ENCODE measurements at regions of chr1 and their contacts with region 1.

Region 1: GRCh38 chr1:161994175-161994668 is 29.4 kb downstream of the OLFML2B start:
- DNase-seq: no peak
- ATAC-seq: no peak
- H3K4me3 ChIP-seq: no peak overlapping the region
- H3K27ac ChIP-seq: no peak overlapping the region
- H3K4me1 ChIP-seq: no peaks in the 10 kb centered on the region
- CTCF ChIP-seq: no peak
- EP300 ChIP-seq: no peak
- POLR2A ChIP-seq: no peak
- RAD21 ChIP-seq: no peak

Region 2: GRCh38 chr1:161816201-161816600 is 178.0 kb before region 1 on chr1:
- CTCF ChIA-PET with region 1: no interaction called
- POLR2A ChIA-PET with region 1: interaction called, 10 read pairs
- DNase-seq: no peak
- ATAC-seq: no peak
- H3K4me3 ChIP-seq: no peak overlapping the region
- H3K27ac ChIP-seq: no peak overlapping the region
- H3K4me1 ChIP-seq: no peaks in the 10 kb centered on the region
- CTCF ChIP-seq: no peak
- EP300 ChIP-seq: no peak
- POLR2A ChIP-seq: no peak
- RAD21 ChIP-seq: no peak

Measured in A549 (cell line).